PC-3 (cell line): ENCODE measurements at regions of chr11 and their contacts with region 1.

Region 1: GRCh38 chr11:83193315-83194280 is at the start of gene ANKRD42:
- DNase-seq: peak; percentile 98
- ATAC-seq: peak; percentile 84
- H3K4me3 ChIP-seq: peak within 1 kb of the TSS; percentile 96
- H3K27ac ChIP-seq: peak within 1 kb of the TSS; percentile 58
- H3K4me1 ChIP-seq: peaks cover 29% of the 10 kb centered on the region
- H3K27me3 ChIP-seq: no peaks in the 10 kb centered on the region
- CTCF ChIP-seq: no peak
- total RNA-seq, gene ANKRD42: 6.6 and 11.2 TPM in 2 replicates

Region 2: DNA sequence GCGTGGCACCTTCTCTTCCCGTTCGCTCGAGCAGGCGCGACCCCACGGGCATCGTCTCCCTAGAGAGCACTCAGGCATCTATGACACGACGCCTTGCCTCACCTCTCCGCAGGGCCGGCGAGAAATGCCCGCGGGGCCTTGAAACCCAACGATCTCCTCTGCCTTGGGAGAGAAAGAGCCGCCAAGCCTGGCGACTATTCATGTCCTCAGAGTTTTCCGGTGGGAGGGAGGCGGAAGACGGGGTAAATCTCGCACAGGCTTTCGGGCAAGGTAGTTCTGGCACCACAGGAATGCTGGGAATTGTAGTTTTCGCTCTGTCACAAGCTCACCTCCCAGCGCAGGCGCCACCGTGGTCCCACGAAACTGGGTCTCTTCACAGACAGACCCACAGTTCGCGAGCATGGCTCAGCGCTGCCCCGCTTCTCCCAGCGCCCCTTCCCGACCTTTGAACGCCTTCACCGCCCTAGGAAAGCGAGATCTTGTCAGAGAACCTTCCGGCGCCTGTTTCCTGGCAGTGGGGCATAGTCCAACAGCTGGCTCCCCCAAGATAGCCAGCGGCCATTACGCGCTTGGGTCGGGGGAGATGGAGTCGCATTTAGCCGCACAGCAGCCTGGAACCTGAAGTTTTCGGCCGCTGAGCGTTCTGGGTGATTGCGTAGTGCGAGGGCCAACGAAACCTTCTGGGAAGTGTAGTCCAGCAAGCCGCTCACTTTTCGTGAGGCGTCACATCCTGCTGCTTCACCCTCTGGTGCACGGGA is 92.4 kb after region 1 on chr11 and contains the start of gene CCDC90B:
- CTCF ChIA-PET with region 1: no interaction called
- POLR2A ChIA-PET with region 1: no interaction called
- intact Hi-C with region 1: loop called (anchors 2 kb)
- DNase-seq: peak; percentile 99
- ATAC-seq: peak; percentile 85
- H3K4me3 ChIP-seq: peak within 1 kb of the TSS; percentile 83
- H3K27ac ChIP-seq: peak within 1 kb of the TSS; percentile 82
- H3K4me1 ChIP-seq: peaks cover 33% of the 10 kb centered on the region
- H3K27me3 ChIP-seq: no peaks in the 10 kb centered on the region
- CTCF ChIP-seq: no peak
- total RNA-seq, gene CCDC90B: 59.4 and 70.8 TPM in 2 replicates